ENCODE measurements at regions of chr9 and their contacts with region 1.

Region 1: DNA sequence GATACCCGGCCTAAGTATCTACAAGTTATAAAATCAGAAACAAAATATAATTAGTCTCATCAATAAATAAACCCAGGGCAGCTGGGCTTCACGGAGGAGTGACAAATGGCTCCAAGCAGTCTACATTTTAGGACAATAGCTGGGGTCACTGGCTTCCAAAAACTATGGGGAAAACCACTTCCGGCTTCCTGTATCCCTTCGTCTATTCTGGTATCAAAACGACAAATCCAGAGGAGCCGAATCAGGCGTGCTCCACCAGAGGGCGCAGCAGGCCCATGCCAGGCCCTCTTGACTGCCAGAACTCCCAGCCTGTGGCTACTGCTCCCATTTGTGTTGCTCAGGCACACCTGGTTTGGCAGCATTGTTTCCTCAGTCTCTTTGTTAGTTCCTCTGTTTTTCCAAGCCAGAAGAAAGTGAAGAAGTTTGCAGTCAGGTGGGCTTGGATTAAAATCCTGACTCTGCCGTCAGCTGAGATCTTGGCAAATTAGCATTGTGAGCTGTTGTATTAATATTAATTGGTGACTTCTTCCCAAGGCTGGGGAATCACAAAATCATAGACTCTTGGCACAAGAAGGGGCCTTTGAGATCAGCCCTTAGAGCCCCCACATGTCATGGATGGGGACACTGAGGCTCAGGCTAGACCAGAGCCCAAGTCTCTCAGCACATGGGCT is 11.6 kb upstream of the RAB14 start:
- DNase-seq: peak; percentile 88 to 97 (median 91)
- H3K4me3 ChIP-seq: no peak overlapping the region
- H3K27ac ChIP-seq: peak overlapping the region in 1 of 5 donors; percentile 35
- H3K4me1 ChIP-seq: no peaks in the 10 kb centered on the region
- H3K27me3 ChIP-seq: no peaks in the 10 kb centered on the region
- CTCF ChIP-seq: peak; percentile 89 to 97 (median 94)
- POLR2A ChIP-seq: peak in 1 of 2 donors; percentile 11

Region 2: GRCh38 chr9:121150188-121150587 is 63.1 kb before region 1 on chr9:
- intact Hi-C with region 1: no loop called
- DNase-seq: no peak
- H3K4me3 ChIP-seq: no peak overlapping the region
- H3K27ac ChIP-seq: no peak overlapping the region
- H3K4me1 ChIP-seq: no peaks in the 10 kb centered on the region
- H3K27me3 ChIP-seq: no peaks in the 10 kb centered on the region
- CTCF ChIP-seq: no peak
- POLR2A ChIP-seq: no peak

Region 3: DNA sequence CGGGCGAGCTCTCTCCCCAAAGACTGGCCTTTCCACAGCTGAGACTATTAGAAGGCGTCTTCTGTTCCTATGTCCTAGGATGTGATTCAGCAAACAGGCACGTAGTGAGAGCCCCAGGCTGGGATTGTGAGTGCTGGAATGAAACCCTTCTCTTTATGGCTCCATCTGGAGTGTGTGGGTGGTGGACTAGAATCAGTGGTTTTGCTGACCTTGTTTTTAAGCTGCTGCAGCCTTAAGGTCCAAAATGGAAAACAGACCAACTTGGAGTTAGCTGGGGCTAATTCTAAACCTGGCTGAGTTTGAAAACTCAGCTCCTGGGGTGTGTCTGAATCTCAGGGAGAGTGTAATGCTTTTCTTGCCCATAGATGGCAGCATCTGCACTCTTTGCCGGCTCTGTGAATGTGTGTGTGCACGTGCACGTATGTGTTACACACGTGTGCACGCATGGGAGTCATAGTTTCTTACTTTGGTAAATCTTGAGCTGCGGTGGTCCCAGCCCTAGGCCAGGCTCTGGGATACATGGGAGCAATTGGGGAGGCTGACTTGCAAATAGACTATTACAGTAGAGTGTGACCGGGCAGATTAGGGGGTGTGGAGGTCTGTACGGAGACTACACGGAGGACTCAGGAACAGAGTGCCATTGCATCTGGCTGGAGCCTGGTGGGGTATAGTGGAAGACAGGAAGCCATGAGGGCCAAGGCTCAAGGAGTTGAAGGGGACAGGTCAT is 65.4 kb after region 1 on chr9:
- intact Hi-C with region 1: loop called in 1 of 2 experiments (anchors 10 kb)
- DNase-seq: peak; percentile 67 to 90 (median 76)
- H3K4me3 ChIP-seq: no peak overlapping the region
- H3K27ac ChIP-seq: peak overlapping the region; percentile 1 to 95 (median 66)
- H3K4me1 ChIP-seq: peaks cover 42 to 66% of the 10 kb centered on the region in 2 donors
- H3K27me3 ChIP-seq: no peaks in the 10 kb centered on the region
- CTCF ChIP-seq: peak; percentile 67 to 93 (median 84)
- POLR2A ChIP-seq: peak in 1 of 2 donors; percentile 44

Region 4: DNA sequence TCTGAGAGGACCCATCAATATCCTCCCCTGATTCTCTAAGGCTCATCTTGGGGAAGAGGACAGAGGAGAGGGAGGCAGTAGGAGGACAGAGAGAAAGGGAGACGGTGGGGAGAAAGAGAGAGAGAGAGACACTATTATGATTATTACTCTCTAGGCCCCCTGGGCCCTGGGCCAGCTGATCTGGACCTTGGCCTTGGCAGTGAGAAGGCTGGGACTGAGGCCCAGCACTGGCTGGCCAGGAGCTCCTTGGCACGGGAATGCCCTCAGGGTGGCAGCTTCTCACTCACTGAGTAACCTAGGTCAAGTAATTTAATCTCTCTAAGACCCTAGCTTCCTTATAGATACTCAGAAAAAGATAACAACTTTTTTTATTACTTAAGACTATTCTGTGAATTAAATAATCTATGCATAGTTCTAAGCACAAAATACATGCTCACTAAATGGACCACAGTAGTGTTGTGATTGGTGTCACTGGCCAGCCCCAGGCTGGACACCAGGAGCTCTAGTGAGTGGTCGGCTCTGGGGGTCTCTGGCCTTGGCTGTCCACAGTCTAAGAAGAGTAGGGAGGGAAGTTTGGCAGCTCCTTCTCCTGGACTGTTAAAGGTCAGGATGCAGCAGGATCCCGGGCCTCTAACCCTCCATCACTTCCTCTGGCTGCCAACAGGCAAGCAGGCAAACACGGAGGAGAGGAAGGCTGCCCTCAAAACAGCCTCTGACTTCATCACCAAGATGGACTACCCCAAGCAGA is 104.6 kb after region 1 on chr9:
- intact Hi-C with region 1: loop called (anchors 5 to 10 kb)
- DNase-seq: peak; percentile 56 to 86 (median 75)
- H3K4me3 ChIP-seq: no peak overlapping the region
- H3K27ac ChIP-seq: peak overlapping the region in 2 of 5 donors; percentile 27 to 59
- H3K4me1 ChIP-seq: peaks cover 0 to 7% of the 10 kb centered on the region in 2 donors
- H3K27me3 ChIP-seq: no peaks in the 10 kb centered on the region
- CTCF ChIP-seq: no peak
- POLR2A ChIP-seq: no peak

Region 5: DNA sequence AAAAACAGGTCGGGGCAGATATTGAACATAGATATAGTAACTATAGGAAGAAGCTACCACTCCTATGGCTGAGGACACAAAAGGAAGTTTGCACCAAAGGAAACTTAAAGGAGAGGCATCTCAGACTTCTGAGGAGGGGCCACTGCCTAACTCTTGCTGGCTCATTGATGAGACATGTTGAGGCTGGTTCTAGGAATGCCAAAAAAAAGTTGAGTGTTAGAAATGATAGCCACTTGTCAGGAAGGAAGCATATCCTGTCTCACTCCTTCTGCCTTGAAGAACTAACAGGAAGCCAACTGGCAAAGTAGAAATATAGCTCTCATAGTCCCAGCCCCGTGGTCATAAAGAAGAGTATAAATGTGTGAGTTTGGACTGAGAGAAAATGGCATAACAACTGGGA is 180.0 kb after region 1 on chr9:
- intact Hi-C with region 1: loop called (anchors 5 kb)
- DNase-seq: no peak
- H3K4me3 ChIP-seq: no peak overlapping the region
- H3K27ac ChIP-seq: no peak overlapping the region
- H3K4me1 ChIP-seq: no peaks in the 10 kb centered on the region
- H3K27me3 ChIP-seq: no peaks in the 10 kb centered on the region
- CTCF ChIP-seq: no peak
- POLR2A ChIP-seq: no peak

Region 6: DNA sequence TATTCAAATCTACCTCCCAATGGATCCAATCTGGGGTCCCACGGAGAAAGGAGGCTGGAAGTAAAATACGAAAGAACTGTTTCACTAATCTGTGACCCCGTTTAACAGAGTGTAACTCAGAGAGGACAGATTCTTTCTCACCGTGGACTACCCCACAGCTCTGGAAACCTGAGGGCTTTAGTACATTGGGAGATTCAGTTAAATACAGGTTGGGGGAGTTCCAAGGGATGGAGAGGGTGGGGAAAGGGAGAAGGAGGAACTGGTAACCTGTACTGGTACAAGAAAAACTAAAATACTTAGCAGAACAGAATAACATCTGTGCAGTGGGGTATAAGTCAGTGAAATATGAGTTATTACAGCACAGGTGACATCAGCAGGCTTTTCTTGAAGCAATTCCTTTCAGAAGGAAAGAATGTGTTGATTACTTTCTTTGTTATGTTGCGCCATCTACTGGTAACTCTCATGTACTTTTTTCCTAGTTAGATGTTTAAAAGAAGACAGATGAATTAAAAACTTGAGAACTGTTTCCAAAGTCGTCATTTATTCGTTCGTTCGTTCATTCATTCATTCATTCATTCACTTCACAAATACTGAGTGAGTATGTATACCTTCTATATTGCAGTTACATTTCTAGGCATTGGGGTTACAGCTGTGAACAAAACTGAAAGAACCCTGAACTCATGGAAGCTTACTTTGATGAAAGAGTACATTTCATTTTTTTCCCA is 186.8 kb after region 1 on chr9:
- intact Hi-C with region 1: loop called in 1 of 2 experiments (anchors 5 kb)
- DNase-seq: no peak
- H3K4me3 ChIP-seq: no peak overlapping the region
- H3K27ac ChIP-seq: no peak overlapping the region
- H3K4me1 ChIP-seq: no peaks in the 10 kb centered on the region
- H3K27me3 ChIP-seq: no peaks in the 10 kb centered on the region
- CTCF ChIP-seq: peak; percentile 64 to 87 (median 80)
- POLR2A ChIP-seq: no peak

Measured in adrenal gland (tissue), 19 donors.